Activated CD4-positive, alpha-beta T cell treated with anti-CD3 and anti-CD28 coated beads for 36 hours (primary cell): ENCODE measurements at regions of chr5 and their contacts with region 1.

Region 1: DNA sequence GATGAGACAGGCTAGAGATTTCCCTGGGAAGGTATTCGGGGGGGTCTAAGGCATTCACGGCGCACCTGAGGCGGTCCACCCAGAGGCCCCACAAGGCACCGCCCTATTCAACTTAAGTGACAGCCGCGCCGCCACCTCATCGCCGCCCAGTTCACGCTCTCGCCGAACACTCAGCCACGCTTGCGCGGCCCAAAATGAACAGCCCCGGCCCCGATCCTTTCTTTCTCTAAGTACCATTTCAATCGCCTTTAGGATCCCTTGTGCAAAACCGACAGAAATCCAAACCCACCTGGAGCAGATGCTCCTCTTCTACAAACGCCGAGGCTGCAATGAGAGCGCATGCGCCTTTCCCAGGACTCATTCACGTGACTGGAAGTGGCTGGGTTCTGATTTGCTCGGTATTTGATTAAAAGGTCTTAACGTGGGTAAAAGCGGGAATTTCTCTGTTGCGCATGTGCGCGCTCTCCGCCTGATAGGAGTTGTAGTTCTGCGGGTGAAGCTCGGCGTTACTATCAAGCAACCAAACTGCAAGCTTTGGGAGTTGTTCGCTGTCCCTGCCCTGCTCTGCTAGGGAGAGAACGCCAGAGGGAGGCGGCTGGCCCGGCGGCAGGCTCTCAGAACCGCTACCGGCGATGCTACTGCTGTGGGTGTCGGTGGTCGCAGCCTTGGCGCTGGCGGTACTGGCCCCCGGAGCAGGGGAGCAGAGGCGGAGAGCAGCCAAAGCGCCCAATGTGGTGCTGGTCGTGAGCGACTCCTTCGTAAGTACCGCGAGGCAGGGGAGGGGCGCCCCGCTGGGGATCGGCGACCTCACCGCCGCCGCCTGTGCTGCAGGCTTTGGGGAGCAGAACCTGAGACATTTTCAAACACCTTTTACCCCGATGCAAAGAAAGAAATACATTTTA is at the starts of genes ARSK and SKIC3:
- DNase-seq: peak; percentile 92
- ATAC-seq: peak; percentile 91
- H3K4me3 Mint-ChIP-seq: peak within 1 kb of the TSS; percentile 88
- H3K27ac Mint-ChIP-seq: peak within 1 kb of the TSS; percentile 90
- H3K4me1 Mint-ChIP-seq: peaks cover 37% of the 10 kb centered on the region
- H3K27me3 Mint-ChIP-seq: no peaks in the 10 kb centered on the region
- total RNA-seq, gene ARSK: 4.6 to 5.3 TPM
- total RNA-seq, gene SKIC3: 74.6 to 75.8 TPM

Region 2: DNA sequence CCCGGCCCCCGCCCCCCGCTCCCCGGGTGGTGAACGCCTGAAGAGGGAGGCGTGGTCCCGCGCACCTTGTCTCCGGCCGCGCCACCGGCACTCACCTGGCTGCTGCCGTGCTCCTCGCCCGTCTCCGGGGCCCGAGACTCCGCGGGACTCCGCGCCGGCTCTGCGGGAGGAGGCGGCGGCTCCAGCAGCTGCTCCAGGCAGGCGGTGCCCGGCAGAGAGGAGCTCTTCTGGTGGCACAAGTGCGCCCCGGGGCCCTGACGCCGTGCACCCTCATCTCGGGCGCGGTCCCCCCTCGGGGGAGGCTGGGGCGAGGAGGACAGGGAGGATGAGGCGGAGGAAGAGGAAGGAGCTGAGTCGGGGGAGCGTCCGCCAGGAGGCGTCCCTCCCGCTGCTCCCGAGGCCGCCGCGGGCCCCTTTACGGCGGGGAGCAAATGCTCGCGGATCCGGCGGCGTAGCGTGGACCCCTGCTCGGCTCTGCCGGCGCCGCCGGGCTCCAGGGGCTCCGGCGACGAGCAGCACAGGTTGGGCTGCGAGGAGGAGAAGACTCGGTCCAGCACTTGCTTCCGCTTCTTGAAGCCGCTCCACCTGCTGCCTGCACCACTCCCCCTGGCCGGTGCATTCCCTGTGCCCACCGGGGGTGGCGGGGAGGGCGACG is 271.0 kb before region 1 on chr5:
- CTCF ChIA-PET with region 1: no interaction called
- POLR2A ChIA-PET with region 1: no interaction called
- intact Hi-C with region 1: loop called in 1 of 2 experiments (anchors 10 kb)
- DNase-seq: peak; percentile 50
- ATAC-seq: peak; percentile 61
- H3K4me3 Mint-ChIP-seq: peak overlapping the region; percentile 26
- H3K27ac Mint-ChIP-seq: no peak overlapping the region
- H3K4me1 Mint-ChIP-seq: peaks cover 10% of the 10 kb centered on the region
- H3K27me3 Mint-ChIP-seq: peaks cover 52% of the 10 kb centered on the region

Region 3: GRCh38 chr5:95591490-95591901 is 36.6 kb after region 1 on chr5:
- CTCF ChIA-PET with region 1: no interaction called
- POLR2A ChIA-PET with region 1: no interaction called
- intact Hi-C with region 1: loop called (anchors 1 kb)
- DNase-seq: no peak
- ATAC-seq: peak; percentile 95
- H3K4me3 Mint-ChIP-seq: no peak overlapping the region
- H3K27ac Mint-ChIP-seq: peak overlapping the region; percentile 62
- H3K4me1 Mint-ChIP-seq: peaks cover 30% of the 10 kb centered on the region
- H3K27me3 Mint-ChIP-seq: no peaks in the 10 kb centered on the region

Region 4: GRCh38 chr5:95620030-95620869 is 65.4 kb after region 1 on chr5 and contains the start of gene GPR150:
- CTCF ChIA-PET with region 1: interaction called, 4 read pairs
- POLR2A ChIA-PET with region 1: no interaction called
- intact Hi-C with region 1: loop called (anchors 1 kb)
- DNase-seq: peak; percentile 81
- ATAC-seq: peak; percentile 65
- H3K4me3 Mint-ChIP-seq: peak within 1 kb of the TSS; percentile 75
- H3K27ac Mint-ChIP-seq: peak within 1 kb of the TSS; percentile 73
- H3K4me1 Mint-ChIP-seq: peaks cover 47% of the 10 kb centered on the region
- H3K27me3 Mint-ChIP-seq: no peaks in the 10 kb centered on the region
- total RNA-seq, gene GPR150: 0.37 to 0.46 TPM

Region 5: GRCh38 chr5:95631991-95632675 is 77.2 kb after region 1 on chr5:
- CTCF ChIA-PET with region 1: no interaction called
- POLR2A ChIA-PET with region 1: interaction called, 10 read pairs
- intact Hi-C with region 1: loop called (anchors 1 kb)
- DNase-seq: peak; percentile 85
- ATAC-seq: peak; percentile 99
- H3K4me3 Mint-ChIP-seq: peak overlapping the region; percentile 22
- H3K27ac Mint-ChIP-seq: peak overlapping the region; percentile 94
- H3K4me1 Mint-ChIP-seq: peaks cover 22% of the 10 kb centered on the region
- H3K27me3 Mint-ChIP-seq: peaks cover 1% of the 10 kb centered on the region

Region 6: GRCh38 chr5:95822542-95823181 is 267.8 kb after region 1 on chr5 and contains the start of gene GLRX:
- CTCF ChIA-PET with region 1: no interaction called
- POLR2A ChIA-PET with region 1: no interaction called
- intact Hi-C with region 1: loop called (anchors 1 to 5 kb)
- DNase-seq: peak; percentile 68
- ATAC-seq: peak; percentile 18
- H3K4me3 Mint-ChIP-seq: peak within 1 kb of the TSS; percentile 92
- H3K27ac Mint-ChIP-seq: peak within 1 kb of the TSS; percentile 92
- H3K4me1 Mint-ChIP-seq: peaks cover 62% of the 10 kb centered on the region
- H3K27me3 Mint-ChIP-seq: no peaks in the 10 kb centered on the region
- total RNA-seq, gene GLRX: 21.0 to 31.5 TPM

Region 7: DNA sequence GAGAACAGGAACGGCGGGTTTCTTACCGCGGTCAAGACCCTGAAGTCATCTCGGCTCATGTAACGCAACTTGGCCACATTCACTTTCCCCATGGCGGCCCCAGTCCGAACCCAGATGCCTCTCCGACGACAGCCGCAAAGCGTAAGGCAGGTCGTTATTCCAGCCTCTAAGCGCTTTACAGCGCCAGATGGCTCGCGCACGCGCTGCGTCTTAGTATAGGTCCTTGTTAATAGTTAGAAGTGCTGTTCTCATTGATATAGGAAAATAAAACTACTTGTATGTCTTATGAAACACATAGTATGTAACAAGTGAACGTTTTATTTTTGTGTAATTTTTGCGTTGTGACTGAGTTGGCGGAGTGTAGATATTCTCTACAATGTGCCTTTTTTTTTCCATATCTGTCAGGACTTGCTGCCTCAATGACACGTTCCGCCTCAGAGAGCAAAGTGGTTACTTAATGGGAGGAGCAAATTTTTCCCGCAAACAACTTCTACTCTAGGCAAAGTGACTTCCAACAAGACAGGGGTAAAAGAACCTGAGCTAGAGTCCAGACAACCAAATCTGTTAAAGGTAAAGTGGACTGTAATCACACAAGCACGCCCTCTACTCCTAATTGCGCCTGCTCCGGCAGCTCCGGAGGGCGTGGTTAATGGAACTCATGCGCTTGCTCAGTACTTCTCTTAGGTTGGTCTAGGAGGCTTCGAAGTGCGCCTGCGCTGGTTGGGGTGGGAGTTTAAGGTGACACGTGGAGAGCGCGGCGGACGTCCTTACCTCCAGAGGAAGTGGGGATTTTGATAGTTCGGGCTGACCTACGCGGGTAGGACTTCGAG is 1628.4 kb after region 1 on chr5 and contains the start of gene RIOK2:
- CTCF ChIA-PET with region 1: no interaction called
- POLR2A ChIA-PET with region 1: no interaction called
- intact Hi-C with region 1: loop called in 1 of 2 experiments (anchors 10 kb)
- DNase-seq: peak; percentile 96
- ATAC-seq: peak; percentile 94
- H3K4me3 Mint-ChIP-seq: peak within 1 kb of the TSS; percentile 82
- H3K27ac Mint-ChIP-seq: peak within 1 kb of the TSS; percentile 100
- H3K4me1 Mint-ChIP-seq: peaks cover 33% of the 10 kb centered on the region
- H3K27me3 Mint-ChIP-seq: no peaks in the 10 kb centered on the region
- total RNA-seq, gene RIOK2: 30.9 to 39.2 TPM